Cardiac septum (tissue), 1 donor: ENCODE measurements at regions of chr7 and their contacts with region 1.

Region 1: GRCh38 chr7:8284606-8285005 is 22.6 kb upstream of the ICA1 start:
- DNase-seq: no peak

Region 2: GRCh38 chr7:7595451-7595850 is 689.2 kb before region 1 on chr7:
- intact Hi-C with region 1: no loop called
- DNase-seq: no peak

Region 3: GRCh38 chr7:8232999-8233847 is 51.4 kb before region 1 on chr7:
- intact Hi-C with region 1: loop called (anchors 5 kb)
- DNase-seq: no peak